ENCODE measurements at regions of chr17 and their contacts with region 1.

Region 1: DNA sequence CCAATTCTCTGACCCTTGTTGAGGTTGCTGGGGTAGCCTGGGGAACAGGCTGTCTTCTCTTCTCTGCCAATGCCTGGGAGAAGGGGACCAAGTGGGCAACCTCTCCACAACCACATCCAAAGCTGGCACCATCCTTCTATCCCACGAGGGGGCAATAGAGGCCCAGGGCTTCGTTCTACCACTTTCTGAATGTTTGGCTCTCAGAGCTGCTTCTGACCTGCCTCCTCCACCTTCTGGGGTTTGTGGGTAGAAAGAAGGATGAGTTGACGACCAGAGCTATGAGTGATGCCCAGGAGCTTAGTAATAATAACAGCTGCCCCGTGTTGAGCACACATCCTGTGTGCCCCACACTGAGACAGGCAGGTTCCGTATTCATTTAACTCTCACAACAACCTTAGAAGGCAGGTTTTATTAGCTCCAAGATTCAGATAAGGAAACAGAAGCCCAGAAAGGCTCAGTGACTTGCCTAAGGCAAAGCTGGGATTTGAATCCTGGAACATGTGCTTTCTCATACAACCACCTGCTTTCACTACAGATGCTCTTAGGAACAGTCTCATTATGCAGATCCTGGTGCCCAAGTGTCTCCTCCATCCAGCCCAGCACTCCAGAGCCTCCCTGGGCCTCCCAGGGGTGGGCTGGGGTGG is 11.1 kb downstream of the TSPOAP1 start:
- DNase-seq: peak; percentile 66
- ATAC-seq: peak; percentile 95
- H3K4me3 ChIP-seq: no peak overlapping the region
- H3K27ac ChIP-seq: peak overlapping the region; percentile 50
- H3K4me1 ChIP-seq: peaks cover 7% of the 10 kb centered on the region
- H3K27me3 ChIP-seq: no peaks in the 10 kb centered on the region
- CTCF ChIP-seq: peak; percentile 78 to 91 (median 87)
- EP300 ChIP-seq: no peak
- POLR2A ChIP-seq: peak; percentile 22; the same call in 1 of the 2 replicates
- RAD21 ChIP-seq: peak; percentile 93

Region 2: GRCh38 chr17:58148609-58149008 is 168.9 kb before region 1 on chr17:
- CTCF ChIA-PET with region 1: no interaction called
- POLR2A ChIA-PET with region 1: no interaction called
- RAD21 ChIA-PET with region 1: no interaction called
- SMC1A ChIA-PET with region 1: no interaction called
- in situ Hi-C with region 1: no loop called
- intact Hi-C with region 1: no loop called
- DNase-seq: no peak
- ATAC-seq: no peak
- H3K4me3 ChIP-seq: no peak overlapping the region
- H3K27ac ChIP-seq: no peak overlapping the region
- H3K4me1 ChIP-seq: no peaks in the 10 kb centered on the region
- H3K27me3 ChIP-seq: peaks cover 2 to 7% of the 10 kb centered on the region in 2 experiments
- CTCF ChIP-seq: no peak
- EP300 ChIP-seq: no peak
- POLR2A ChIP-seq: no peak
- RAD21 ChIP-seq: no peak

Region 3: GRCh38 chr17:58303971-58304725 is 13.4 kb before region 1 on chr17:
- CTCF ChIA-PET with region 1: interaction called, 56 read pairs
- POLR2A ChIA-PET with region 1: interaction called, 3 read pairs
- RAD21 ChIA-PET with region 1: interaction called, 12 read pairs
- SMC1A ChIA-PET with region 1: interaction called, 11 read pairs
- in situ Hi-C with region 1: no loop called
- intact Hi-C with region 1: no loop called
- DNase-seq: no peak
- ATAC-seq: peak; percentile 95
- H3K4me3 ChIP-seq: no peak overlapping the region
- H3K27ac ChIP-seq: no peak overlapping the region
- H3K4me1 ChIP-seq: no peaks in the 10 kb centered on the region
- H3K27me3 ChIP-seq: no peaks in the 10 kb centered on the region; a peak in 1 of 4 replicates
- CTCF ChIP-seq: peak; percentile 79 to 96 (median 96)
- EP300 ChIP-seq: no peak
- POLR2A ChIP-seq: no peak
- RAD21 ChIP-seq: peak; percentile 67

Region 4: DNA sequence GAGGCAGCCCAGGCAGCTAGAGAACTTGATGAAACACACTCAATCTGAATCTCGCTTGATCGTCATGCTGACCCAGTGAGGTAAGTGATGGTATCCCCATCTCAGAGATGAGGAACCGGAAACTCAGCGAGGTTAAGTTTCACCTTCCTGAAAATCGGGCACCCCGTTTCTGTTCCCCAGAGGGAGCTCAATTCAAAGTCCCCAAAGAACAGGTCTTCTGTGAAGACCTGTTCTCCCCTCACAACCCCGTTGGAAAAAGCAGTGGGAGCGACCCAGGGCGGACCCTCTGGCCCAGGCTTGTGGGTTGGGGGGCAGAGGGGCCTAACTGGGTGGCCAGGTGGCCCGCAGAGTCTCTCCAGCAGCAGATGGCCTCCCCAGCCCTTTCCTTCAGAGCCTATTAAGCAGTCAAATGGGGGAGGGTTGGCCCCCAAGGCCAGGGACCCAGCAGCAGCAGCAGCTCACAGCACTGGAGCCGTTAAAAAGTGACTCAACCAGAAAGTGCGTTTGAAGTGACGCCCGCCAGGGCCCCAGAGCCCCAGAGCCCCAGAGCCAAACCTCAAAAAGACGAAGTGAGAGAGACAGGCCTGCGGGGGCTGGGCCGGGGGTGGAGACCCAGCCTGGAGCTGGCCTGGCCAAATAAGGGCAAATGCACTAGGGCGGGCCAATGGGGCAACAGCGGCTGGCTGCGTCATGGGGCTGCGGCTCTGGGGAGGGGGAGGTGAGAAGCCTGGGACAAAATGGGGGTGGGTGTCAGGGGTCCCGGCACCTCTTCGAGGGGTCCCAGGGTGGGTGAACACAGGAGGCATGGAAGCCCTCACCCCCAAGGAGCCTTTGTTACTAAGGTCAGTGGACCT is 20.3 kb after region 1 on chr17:
- CTCF ChIA-PET with region 1: interaction called, 163 read pairs
- POLR2A ChIA-PET with region 1: interaction called, 77 read pairs
- RAD21 ChIA-PET with region 1: interaction called, 227 read pairs
- SMC1A ChIA-PET with region 1: interaction called, 249 read pairs
- in situ Hi-C with region 1: no loop called
- intact Hi-C with region 1: no loop called
- DNase-seq: peak; percentile 90
- ATAC-seq: peak; percentile 62
- H3K4me3 ChIP-seq: peak overlapping the region; percentile 83
- H3K27ac ChIP-seq: peak overlapping the region; percentile 100
- H3K4me1 ChIP-seq: peaks cover 59% of the 10 kb centered on the region
- H3K27me3 ChIP-seq: no peaks in the 10 kb centered on the region
- CTCF ChIP-seq: no peak
- EP300 ChIP-seq: peak; percentile 98
- POLR2A ChIP-seq: peak; percentile 82
- RAD21 ChIP-seq: peak; percentile 19; the same call in 1 of the 2 replicates

Region 5: DNA sequence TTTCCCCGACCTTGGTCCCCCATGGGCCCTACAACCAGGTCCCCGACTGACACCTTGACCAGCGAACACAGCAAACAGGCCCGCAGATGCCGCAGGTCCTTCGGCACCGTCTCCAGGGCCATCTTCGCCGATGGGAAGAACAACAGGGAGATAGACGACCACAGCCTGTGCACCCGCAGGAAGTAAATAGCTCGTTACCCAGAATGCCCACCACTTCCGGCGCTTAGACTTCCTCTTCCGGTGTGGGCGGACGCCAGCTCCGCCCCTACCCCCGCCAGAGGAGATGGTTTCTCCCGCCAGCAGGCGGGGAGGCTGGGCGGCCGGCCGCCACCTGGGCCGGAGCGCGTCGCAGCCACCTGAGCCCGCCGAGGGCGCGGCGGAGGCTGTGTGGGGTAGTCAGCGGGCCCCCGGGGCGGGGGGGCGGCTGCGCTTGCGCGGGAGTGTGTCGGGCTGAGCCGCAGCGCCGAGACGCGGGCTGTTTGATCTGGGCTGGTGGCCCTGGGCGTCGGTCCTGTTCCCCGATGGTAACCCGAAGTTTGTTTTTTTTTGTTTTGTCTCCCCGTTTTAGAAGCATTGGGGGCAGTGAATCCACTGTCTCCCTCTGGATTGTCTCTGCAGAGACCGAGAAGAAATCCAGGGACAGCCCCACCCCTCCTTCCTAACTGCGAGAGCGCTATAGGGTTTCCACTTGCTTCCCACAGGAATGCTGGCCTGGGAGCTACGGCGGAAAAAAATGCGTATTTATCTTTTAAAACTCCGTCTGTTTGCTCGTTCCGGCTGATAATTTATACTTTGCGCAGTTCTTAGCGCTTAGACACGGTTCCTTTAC is 34.7 kb after region 1 on chr17 and contains the start of gene SUPT4H1:
- CTCF ChIA-PET with region 1: interaction called, 163 read pairs
- POLR2A ChIA-PET with region 1: interaction called, 10 read pairs
- RAD21 ChIA-PET with region 1: interaction called, 227 read pairs
- SMC1A ChIA-PET with region 1: interaction called, 249 read pairs
- in situ Hi-C with region 1: no loop called
- intact Hi-C with region 1: no loop called
- DNase-seq: peak; percentile 73
- ATAC-seq: peak; percentile 96
- H3K4me3 ChIP-seq: peak within 1 kb of the TSS; percentile 94
- H3K27ac ChIP-seq: peak within 1 kb of the TSS; percentile 93
- H3K4me1 ChIP-seq: peaks cover 10% of the 10 kb centered on the region
- H3K27me3 ChIP-seq: no peaks in the 10 kb centered on the region
- CTCF ChIP-seq: no peak; a peak in 1 of 6 replicates
- EP300 ChIP-seq: peak in 1 of 2 experiments; percentile 43; a peak in 2 of 4 replicates
- POLR2A ChIP-seq: peak; percentile 91
- RAD21 ChIP-seq: peak; percentile 35; the same call in 1 of the 2 replicates
- polyA plus RNA-seq, gene SUPT4H1: 148 to 293 TPM

Region 6: DNA sequence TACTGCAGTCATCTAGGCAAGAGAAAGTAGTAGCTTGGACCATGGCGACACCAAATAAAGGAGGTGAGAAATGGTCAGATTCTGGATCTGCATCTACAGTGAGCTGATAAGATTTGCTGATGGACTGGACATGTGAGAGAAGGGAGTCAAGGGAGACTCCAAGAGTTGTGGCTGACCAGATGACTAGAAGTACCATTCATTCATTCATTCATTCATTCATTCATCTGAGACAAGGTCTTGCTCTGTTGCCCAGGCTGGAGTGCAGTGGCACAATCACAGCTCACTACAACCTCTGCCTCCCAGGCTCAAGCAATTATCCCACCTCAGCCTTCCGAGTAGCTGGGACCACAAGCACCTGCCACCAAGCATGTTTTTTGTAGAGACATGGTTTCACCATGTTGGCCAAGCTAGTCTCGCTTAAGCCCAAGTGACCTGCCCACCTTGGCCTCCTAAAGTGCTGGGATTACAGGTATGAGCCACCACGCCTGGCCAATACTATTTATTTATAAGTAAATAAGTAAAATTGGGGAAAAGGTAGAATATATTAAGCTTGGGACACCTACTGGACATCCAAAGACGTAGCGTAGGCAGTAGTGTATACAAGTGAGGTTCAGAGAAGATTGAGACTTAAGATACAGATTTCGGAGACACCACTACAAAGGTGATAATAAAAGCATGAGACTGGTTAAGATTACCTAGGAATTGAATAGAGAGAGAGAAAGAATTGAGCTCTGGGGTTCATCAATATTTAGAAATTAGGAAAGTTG is 115.4 kb after region 1 on chr17:
- CTCF ChIA-PET with region 1: interaction called, 23 read pairs
- POLR2A ChIA-PET with region 1: no interaction called
- RAD21 ChIA-PET with region 1: interaction called, 31 read pairs
- SMC1A ChIA-PET with region 1: interaction called, 21 read pairs
- in situ Hi-C with region 1: no loop called
- intact Hi-C with region 1: no loop called
- DNase-seq: no peak
- ATAC-seq: 0 out of 3 replicates have a peak, but pooled peaks have one; percentile 29
- H3K4me3 ChIP-seq: no peak overlapping the region
- H3K27ac ChIP-seq: no peak overlapping the region
- H3K4me1 ChIP-seq: no peaks in the 10 kb centered on the region; the same call in 1 of the 2 replicates
- H3K27me3 ChIP-seq: no peaks in the 10 kb centered on the region
- CTCF ChIP-seq: 0 out of 6 replicates have a peak, but pooled peaks of 1 of the 3 experiments have one; percentile 14
- EP300 ChIP-seq: no peak
- POLR2A ChIP-seq: no peak
- RAD21 ChIP-seq: no peak

Measured in GM12878 (cell line).